Activated naive CD4-positive, alpha-beta T cell treated with anti-CD3 and anti-CD28 coated beads, Interleukin-2, amount 10 ng/mL, durations not matched to agents 7 days and 5 days (primary cell): ENCODE measurements at regions of chr18 and their contacts with region 1.

Region 1: DNA sequence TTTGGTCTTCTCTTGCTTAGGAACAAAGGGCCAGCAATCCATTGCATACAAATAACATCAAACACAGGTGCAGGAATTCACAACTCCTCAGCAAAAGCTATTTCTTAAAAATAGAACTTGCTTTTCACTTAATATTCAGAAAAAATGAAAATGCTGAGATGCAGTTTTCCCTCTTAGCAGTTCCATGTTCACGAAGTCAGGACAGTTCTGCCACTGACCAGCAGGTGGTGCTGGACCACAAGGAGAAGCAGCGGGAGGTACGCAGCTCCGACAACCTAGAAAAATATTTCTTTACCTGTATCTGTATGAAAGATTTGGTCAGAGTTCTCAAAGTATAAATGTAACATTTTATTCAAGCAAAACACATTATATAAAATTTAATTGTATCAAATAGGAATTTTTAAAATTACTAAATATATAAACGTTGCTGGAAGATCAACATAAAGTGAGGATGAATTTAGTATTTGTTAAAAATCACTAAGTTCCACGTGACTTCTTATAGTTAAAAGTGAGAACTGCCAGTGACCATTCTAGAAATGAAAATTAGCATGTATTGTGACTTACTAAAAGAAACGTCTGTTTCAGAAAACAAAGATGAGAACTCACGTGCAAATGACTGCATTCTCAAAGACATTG is 48.8 kb downstream of the ADNP2 start:
- DNase-seq: peak; percentile 83
- H3K4me3 Mint-ChIP-seq: no peak overlapping the region
- H3K27ac Mint-ChIP-seq: no peak overlapping the region
- H3K4me1 Mint-ChIP-seq: peaks cover 5% of the 10 kb centered on the region
- H3K27me3 Mint-ChIP-seq: peaks cover 35% of the 10 kb centered on the region

Region 2: GRCh38 chr18:80147418-80148325 is 10.2 kb before region 1 on chr18:
- CTCF ChIA-PET with region 1: interaction called, 50 read pairs
- DNase-seq: peak; percentile 91
- H3K4me3 Mint-ChIP-seq: peak overlapping the region; percentile 81
- H3K27ac Mint-ChIP-seq: peak overlapping the region; percentile 56
- H3K4me1 Mint-ChIP-seq: peaks cover 24% of the 10 kb centered on the region
- H3K27me3 Mint-ChIP-seq: peaks cover 31% of the 10 kb centered on the region

Region 3: GRCh38 chr18:80171054-80171872 is 13.4 kb after region 1 on chr18:
- CTCF ChIA-PET with region 1: interaction called, 10 read pairs
- DNase-seq: peak; percentile 63
- H3K4me3 Mint-ChIP-seq: no peak overlapping the region
- H3K27ac Mint-ChIP-seq: no peak overlapping the region
- H3K4me1 Mint-ChIP-seq: peaks cover 13% of the 10 kb centered on the region
- H3K27me3 Mint-ChIP-seq: peaks cover 72% of the 10 kb centered on the region

Region 4: DNA sequence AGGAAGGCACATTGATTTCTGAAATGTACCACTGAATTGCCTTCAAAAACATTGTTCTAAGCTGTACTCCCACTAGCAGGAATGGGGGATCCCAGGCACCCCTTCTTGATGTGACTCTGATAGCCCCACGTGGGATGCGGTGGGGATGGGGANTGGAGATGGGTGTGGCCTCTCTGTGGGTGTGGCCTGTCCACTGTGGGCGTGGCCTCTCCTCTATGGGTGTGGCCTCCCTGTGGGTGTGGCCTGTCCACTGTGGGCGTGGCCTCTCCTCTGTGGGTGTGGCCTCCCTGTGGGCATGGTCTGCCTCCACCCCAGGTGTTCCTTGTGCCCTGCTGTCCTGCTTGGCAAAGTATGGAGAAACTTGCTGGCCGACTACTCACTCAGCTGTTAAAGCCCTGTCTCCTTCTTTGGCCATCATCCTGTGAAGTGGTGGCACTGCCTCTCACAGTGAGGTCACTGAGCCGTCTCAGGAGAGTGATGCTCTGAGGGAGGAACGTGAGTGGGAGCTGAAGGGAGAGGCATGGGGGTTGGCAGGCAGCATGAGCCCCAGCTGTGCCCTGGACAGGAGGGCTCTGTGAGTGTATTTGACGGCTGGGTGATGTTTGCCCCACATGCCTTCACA is 96.2 kb after region 1 on chr18:
- CTCF ChIA-PET with region 1: interaction called, 45 read pairs
- DNase-seq: peak; percentile 31
- H3K4me3 Mint-ChIP-seq: no peak overlapping the region
- H3K27ac Mint-ChIP-seq: no peak overlapping the region
- H3K4me1 Mint-ChIP-seq: no peaks in the 10 kb centered on the region
- H3K27me3 Mint-ChIP-seq: peaks cover 33% of the 10 kb centered on the region